ENCODE measurements at regions of chr17 and their contacts with region 1.

Region 1: DNA sequence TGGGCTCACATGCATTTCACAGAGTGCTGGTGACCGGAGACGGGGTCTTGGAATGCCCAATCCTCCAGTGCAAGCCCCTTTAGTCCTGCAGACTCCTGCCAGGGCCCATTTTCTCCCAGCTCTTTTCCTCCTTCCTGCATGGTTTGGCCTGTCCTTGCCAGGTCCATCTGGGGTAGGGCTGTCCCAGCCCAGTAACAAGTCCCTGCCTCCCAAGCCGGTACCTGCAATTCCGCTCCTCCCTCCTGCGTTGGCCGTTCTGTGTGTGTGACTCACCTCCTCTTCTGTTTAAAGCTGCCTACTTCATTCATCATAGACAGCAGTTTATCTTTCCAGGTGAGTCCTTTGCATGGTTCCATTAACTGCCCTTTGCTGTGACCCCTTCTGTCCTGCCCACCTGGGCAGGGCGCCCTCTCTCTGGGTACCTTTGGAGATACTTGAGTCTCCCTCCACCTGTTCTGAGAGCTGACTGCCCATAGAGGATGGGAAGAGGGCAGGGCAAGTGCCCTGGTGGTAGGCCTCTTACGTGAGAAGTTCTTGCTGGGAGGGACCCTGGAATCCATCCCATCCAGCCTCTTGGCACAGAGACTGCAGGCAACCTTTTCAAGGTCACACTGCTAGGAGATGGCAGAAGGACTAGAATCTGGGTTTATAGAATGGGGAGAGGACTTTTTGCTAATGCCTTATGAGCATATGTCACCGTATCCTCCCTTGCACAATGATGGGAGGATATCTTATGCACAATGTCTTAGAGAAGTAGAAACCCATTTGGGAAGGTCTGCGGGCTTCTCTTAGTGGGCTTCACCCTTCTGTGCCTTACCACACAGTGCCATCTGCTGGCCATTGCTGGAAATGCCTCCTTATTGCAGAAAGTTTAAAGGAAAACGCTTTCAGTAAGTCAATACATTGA is 29.7 kb upstream of the LGALS9 start:
- DNase-seq: peak; percentile 56
- ATAC-seq: peak; percentile 17; the same call in 2 of the 3 replicates
- H3K4me3 ChIP-seq: no peak overlapping the region
- H3K27ac ChIP-seq: no peak overlapping the region
- H3K4me1 ChIP-seq: no peaks in the 10 kb centered on the region
- H3K27me3 ChIP-seq: no peaks in the 10 kb centered on the region
- CTCF ChIP-seq: peak; percentile 85
- EP300 ChIP-seq: no peak
- POLR2A ChIP-seq: no peak
- RAD21 ChIP-seq: peak; percentile 67

Region 2: GRCh38 chr17:27236717-27237315 is 364.5 kb before region 1 on chr17:
- CTCF ChIA-PET with region 1: interaction called, 4 read pairs
- POLR2A ChIA-PET with region 1: no interaction called
- in situ Hi-C with region 1: loop called (anchors 10 kb)
- intact Hi-C with region 1: loop called (anchors 10 kb)
- DNase-seq: peak; percentile 63
- ATAC-seq: peak; percentile 60; the same call in 2 of the 3 replicates
- H3K4me3 ChIP-seq: no peak overlapping the region
- H3K27ac ChIP-seq: no peak overlapping the region
- H3K4me1 ChIP-seq: peaks cover 19% of the 10 kb centered on the region
- H3K27me3 ChIP-seq: peaks cover 2 to 24% of the 10 kb centered on the region in 2 experiments; a peak in 3 of 5 replicates
- CTCF ChIP-seq: peak; percentile 74
- EP300 ChIP-seq: no peak
- POLR2A ChIP-seq: no peak
- RAD21 ChIP-seq: peak; percentile 66

Region 3: DNA sequence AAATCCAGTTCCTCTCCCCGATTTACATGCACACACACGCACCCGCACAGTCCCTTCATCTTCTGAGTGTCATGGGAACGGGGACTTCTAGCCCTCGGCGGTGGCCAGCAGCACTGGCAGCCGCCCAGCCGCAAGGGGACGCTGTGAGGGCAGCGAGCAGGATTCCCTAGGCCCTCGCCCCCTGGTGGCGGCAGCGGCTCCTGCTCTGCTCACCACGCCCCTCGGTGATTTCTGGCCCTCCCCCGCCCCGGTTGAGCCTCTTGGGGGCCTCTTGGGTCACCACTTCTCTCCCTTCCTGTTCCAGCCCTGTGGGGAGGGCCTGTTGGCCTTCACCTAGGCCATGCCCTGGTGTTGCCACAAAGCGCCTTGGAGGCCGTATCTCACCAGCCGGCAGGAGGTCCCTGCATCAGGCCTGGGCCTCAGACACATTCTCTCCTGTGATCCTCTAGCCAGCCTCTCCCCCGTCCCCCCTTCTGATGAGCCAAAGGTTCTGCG is 220.3 kb before region 1 on chr17:
- CTCF ChIA-PET with region 1: interaction called, 61 read pairs
- POLR2A ChIA-PET with region 1: no interaction called
- in situ Hi-C with region 1: loop called (anchors 10 kb)
- intact Hi-C with region 1: loop called (anchors 1 kb)
- DNase-seq: peak; percentile 75
- ATAC-seq: peak; percentile 96
- H3K4me3 ChIP-seq: peak overlapping the region in 1 of 3 experiments; percentile 51; a peak in 1 of 6 replicates
- H3K27ac ChIP-seq: no peak overlapping the region
- H3K4me1 ChIP-seq: peaks cover 28% of the 10 kb centered on the region
- H3K27me3 ChIP-seq: peaks cover 0 to 6% of the 10 kb centered on the region in 2 experiments; a peak in 2 of 5 replicates
- CTCF ChIP-seq: peak; percentile 99
- EP300 ChIP-seq: peak in 1 of 2 experiments; percentile 18; a peak in 1 of 4 replicates
- POLR2A ChIP-seq: no peak
- RAD21 ChIP-seq: peak; percentile 95

Region 4: DNA sequence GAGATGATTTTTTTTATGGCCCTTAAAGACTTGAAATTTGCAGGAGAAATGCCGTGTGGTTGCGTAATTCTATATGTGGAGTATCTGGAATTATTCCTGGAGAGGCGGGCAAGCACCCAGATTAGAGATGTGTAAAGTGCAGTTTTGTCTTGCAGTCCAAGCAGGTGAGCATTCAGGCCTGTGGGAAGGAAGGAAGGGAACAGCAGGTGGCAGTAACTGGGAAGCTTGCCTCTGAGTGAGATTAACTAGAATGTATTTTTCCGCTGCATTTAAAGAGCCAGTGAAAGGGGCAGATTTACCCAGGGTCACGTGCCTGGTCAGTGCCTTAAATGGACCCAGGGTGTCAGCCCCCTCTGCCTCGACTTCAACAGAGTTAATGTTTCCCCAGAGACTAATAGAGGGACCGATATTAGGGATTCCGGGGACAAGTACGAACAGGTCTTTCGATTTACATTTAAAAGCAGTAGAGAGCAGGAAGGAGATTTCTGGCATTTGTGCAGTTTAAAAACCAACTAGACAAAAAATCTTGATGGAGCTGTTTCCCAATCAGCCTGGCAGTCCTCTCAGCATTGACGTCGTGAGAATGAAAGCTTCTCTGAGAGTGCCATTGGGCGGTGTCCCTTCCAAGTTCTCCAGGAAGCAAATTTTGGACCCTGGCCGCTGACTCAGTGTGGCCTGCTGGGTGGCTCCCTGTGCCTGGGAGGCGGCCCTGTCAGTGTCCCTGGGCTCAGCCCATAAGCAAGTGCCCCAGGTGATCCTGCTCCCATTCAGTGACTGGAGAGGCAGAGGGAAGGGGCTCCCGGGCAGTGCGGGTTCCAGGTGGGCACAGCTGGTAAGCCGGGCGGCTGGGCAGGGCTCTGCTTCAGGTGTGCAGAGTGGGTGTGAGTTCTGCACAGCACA is 106.9 kb before region 1 on chr17:
- CTCF ChIA-PET with region 1: interaction called, 66 read pairs
- POLR2A ChIA-PET with region 1: interaction called, 8 read pairs
- in situ Hi-C with region 1: loop called (anchors 5 kb)
- intact Hi-C with region 1: loop called (anchors 1 kb)
- DNase-seq: peak; percentile 84
- ATAC-seq: peak; percentile 86
- H3K4me3 ChIP-seq: peak overlapping the region; percentile 52 to 70 (median 57)
- H3K27ac ChIP-seq: peak overlapping the region; percentile 73
- H3K4me1 ChIP-seq: peaks cover 69% of the 10 kb centered on the region
- H3K27me3 ChIP-seq: no peaks in the 10 kb centered on the region
- CTCF ChIP-seq: peak; percentile 89
- EP300 ChIP-seq: peak; percentile 36 to 45; a peak in 1 of 4 replicates
- POLR2A ChIP-seq: peak; percentile 32 to 61; a peak in 2 of 4 replicates
- RAD21 ChIP-seq: peak; percentile 81

Region 5: GRCh38 chr17:27519550-27519949 is 81.8 kb before region 1 on chr17:
- CTCF ChIA-PET with region 1: no interaction called
- POLR2A ChIA-PET with region 1: no interaction called
- in situ Hi-C with region 1: no loop called
- intact Hi-C with region 1: no loop called
- DNase-seq: no peak
- ATAC-seq: no peak
- H3K4me3 ChIP-seq: no peak overlapping the region
- H3K27ac ChIP-seq: no peak overlapping the region
- H3K4me1 ChIP-seq: peaks cover 61% of the 10 kb centered on the region
- H3K27me3 ChIP-seq: no peaks in the 10 kb centered on the region
- CTCF ChIP-seq: no peak
- EP300 ChIP-seq: no peak
- POLR2A ChIP-seq: no peak
- RAD21 ChIP-seq: no peak

Region 6: GRCh38 chr17:27569884-27570577 is 31.3 kb before region 1 on chr17:
- CTCF ChIA-PET with region 1: interaction called, 9 read pairs
- POLR2A ChIA-PET with region 1: no interaction called
- in situ Hi-C with region 1: no loop called
- intact Hi-C with region 1: loop called (anchors 1 kb)
- DNase-seq: peak; percentile 87
- ATAC-seq: peak; percentile 87
- H3K4me3 ChIP-seq: peak overlapping the region in 1 of 3 experiments; percentile 30; a peak in 2 of 6 replicates
- H3K27ac ChIP-seq: peak overlapping the region; percentile 35
- H3K4me1 ChIP-seq: peaks cover 55% of the 10 kb centered on the region
- H3K27me3 ChIP-seq: no peaks in the 10 kb centered on the region
- CTCF ChIP-seq: no peak; the same call in 1 of the 2 replicates
- EP300 ChIP-seq: peak; percentile 27 to 66; a peak in 2 of 4 replicates
- POLR2A ChIP-seq: no peak
- RAD21 ChIP-seq: no peak